BJ (cell line): ENCODE measurements at regions of chr13 and their contacts with region 1.

Region 1: DNA sequence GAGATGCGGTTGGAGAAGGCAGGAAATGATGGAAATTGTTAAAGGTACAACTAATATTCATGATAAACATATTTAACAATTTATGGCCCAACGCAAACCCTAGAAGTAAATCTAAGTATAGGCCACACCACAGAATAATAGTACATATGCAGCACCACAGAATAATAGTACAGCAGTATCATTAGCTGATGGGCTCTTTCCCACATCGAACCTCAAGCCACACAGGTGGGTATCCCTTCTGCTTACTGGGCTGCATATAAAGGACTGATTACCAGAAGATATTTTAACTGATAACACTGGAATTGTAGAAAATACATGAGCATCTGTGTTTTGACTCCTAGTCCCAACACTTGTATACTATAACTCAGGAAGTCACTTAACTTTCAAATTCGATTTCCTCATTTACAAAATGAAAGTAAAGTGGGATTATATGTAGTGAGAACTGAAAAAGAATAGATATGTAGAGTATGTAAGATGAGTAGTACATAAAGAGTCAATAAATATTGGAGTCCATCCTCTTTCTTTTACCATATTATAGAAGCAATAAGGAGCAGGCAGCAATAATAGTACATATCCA is 91.5 kb downstream of the TSC22D1 start:
- DNase-seq: no peak
- H3K4me3 ChIP-seq: no peak overlapping the region
- H3K27me3 ChIP-seq: no peaks in the 10 kb centered on the region
- CTCF ChIP-seq: no peak

Region 2: DNA sequence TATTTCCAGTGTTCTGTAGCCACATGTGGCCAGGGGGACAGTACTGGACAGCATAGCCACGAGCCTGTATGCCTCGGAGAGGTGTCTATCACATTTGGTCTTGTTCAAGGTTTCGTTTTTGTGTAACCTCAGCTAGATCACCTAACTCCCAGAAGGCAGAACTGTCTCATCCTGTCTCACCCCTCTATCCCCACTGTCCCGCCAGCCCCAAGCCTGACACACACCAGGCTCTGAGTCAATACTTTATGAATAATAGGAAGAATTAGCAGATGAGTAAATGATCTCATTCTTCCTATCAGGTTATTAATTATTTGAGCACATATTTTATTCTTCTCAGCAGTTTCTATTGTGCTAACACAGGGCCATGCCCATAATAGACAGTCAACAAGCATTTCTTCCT is 372.4 kb after region 1 on chr13:
- CTCF ChIA-PET with region 1: no interaction called
- POLR2A ChIA-PET with region 1: no interaction called
- DNase-seq: no peak
- H3K4me3 ChIP-seq: no peak overlapping the region
- H3K27me3 ChIP-seq: no peaks in the 10 kb centered on the region; the same call in 1 of the 2 replicates
- CTCF ChIP-seq: no peak

Region 3: GRCh38 chr13:44969551-44970484 is 485.2 kb after region 1 on chr13:
- CTCF ChIA-PET with region 1: interaction called, 38 read pairs
- POLR2A ChIA-PET with region 1: no interaction called
- DNase-seq: no peak
- H3K4me3 ChIP-seq: no peak overlapping the region
- H3K27me3 ChIP-seq: no peaks in the 10 kb centered on the region
- CTCF ChIP-seq: peak; percentile 70

Region 4: GRCh38 chr13:45015300-45015699 is 530.6 kb after region 1 on chr13:
- CTCF ChIA-PET with region 1: no interaction called
- POLR2A ChIA-PET with region 1: interaction called, 15 read pairs
- DNase-seq: no peak
- H3K4me3 ChIP-seq: no peak overlapping the region
- H3K27me3 ChIP-seq: no peaks in the 10 kb centered on the region
- CTCF ChIP-seq: no peak